ENCODE measurements at regions of chr2 and their contacts with region 1.

Region 1: GRCh38 chr2:179751163-179751809 is 110.1 kb downstream of the ZNF385B start:
- DNase-seq: peak; percentile 36
- CTCF ChIP-seq: no peak

Region 2: GRCh38 chr2:179410552-179411356 is 340.5 kb before region 1 on chr2:
- in situ Hi-C with region 1: loop called (anchors 10 kb)
- DNase-seq: peak; percentile 34
- CTCF ChIP-seq: peak; percentile 63

Region 3: DNA sequence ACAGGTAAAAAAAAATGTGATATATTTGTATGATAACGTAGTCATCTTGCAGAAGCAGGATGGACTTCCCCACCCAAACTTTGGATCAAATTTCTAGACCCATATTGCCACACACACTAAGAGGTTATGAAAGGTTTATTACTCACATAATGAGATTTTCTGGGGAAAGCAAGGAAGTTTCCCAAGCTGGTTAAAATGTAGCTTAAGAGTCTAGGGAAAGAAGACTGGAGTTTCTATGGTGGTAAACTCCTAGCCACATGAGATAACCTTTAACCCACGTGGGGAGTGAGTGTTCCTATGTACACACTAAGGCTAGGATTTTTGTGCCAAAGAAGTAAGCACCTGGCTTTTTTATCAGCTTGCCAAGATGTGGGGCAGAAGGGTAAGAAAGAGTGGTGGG is 893.4 kb after region 1 on chr2:
- in situ Hi-C with region 1: no loop called
- DNase-seq: no peak
- CTCF ChIP-seq: no peak